H1 (cell line): ENCODE measurements at regions of chr7 and their contacts with region 1.

Region 1: DNA sequence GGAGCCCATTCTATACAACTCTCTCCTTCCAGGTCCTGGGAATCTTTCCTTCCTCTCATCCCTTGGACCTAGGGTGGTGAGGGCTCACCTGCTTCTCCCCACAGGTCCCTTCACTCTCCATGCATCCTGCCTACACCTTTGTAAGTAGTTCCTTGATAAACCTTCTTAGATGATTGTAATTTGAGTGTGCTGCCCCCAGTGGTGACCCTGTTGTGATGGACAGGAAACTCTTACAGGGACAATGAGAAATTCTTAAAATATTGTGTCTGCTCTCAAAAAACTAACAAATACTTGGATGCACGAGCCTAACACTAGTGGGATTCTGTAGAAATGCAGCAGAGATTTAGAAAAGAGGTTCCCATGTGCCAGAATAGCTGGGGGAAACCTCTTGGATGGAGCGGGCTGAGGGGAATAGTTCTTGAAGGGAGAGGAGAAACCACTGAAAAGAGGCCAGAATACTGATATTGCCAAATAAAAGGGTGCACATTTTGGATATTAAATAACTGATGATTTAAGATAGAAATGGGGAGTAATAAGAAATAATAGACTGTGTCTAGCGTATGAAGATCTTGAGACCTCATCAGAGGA is 6.7 kb upstream of the PAXIP1 start:
- DNase-seq: no peak
- H3K4me3 ChIP-seq: no peak overlapping the region
- H3K27ac ChIP-seq: no peak overlapping the region
- H3K4me1 ChIP-seq: no peaks in the 10 kb centered on the region
- H3K27me3 ChIP-seq: no peaks in the 10 kb centered on the region
- CTCF ChIP-seq: peak in 2 of 3 experiments; percentile 29 to 54; a peak in 2 of 4 replicates
- EP300 ChIP-seq: no peak
- POLR2A ChIP-seq: no peak
- RAD21 ChIP-seq: no peak; a peak in 1 of 4 replicates

Region 2: DNA sequence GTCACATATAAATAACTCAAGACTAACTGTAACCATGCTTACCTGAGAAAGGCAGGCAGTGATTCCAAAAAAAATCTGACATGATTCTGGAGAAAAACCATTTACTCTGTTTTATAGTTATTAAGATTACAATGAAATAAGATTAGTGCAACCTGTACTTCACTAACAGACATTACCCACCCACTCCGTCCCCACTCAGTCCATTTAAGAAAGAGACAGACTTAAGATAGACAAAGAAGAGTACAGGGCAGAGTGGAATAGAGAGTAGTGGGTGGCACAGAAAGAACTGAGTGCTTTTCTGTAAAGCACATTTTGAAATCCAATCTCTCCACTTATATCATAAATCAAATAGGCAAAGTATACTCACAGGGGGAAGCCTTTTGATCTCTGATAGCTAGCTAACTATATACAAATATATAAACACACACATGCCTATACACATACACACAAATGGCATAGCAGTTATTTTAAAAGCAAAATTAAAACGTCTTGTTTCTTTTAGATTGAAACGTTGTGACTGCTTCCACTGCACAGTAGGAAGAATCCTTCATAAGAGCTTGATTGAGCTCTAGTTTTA is 18.6 kb before region 1 on chr7:
- CTCF ChIA-PET with region 1: interaction called, 56 read pairs
- POLR2A ChIA-PET with region 1: no interaction called
- DNase-seq: no peak
- H3K4me3 ChIP-seq: no peak overlapping the region
- H3K27ac ChIP-seq: no peak overlapping the region
- H3K4me1 ChIP-seq: no peaks in the 10 kb centered on the region; a peak in 1 of 7 replicates
- H3K27me3 ChIP-seq: no peaks in the 10 kb centered on the region
- CTCF ChIP-seq: no peak
- EP300 ChIP-seq: no peak
- POLR2A ChIP-seq: no peak
- RAD21 ChIP-seq: no peak

Region 3: DNA sequence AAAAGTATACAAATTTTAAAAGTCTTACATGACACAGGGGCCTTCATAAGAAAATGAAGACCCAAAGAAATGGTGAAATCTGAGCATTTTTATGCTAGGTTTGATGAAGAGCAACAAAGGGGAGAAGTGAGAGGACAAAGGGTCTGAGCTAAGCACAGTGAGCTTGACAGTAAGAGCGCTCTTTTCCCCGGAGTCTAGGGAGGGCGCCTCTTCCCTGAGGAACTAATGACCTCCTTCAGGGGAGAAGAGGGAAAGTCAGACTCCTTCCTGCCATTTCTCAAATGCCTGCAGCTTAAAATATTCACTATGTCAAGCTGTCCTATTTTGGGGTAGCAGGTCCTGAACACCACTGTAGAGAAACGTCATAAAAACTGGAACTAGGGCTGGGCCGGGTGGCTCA is 11.3 kb after region 1 on chr7:
- CTCF ChIA-PET with region 1: interaction called, 136 read pairs
- POLR2A ChIA-PET with region 1: interaction called, 5 read pairs
- DNase-seq: peak in 1 of 2 experiments; percentile 42
- H3K4me3 ChIP-seq: no peak overlapping the region
- H3K27ac ChIP-seq: no peak overlapping the region
- H3K4me1 ChIP-seq: no peaks in the 10 kb centered on the region; a peak in 2 of 7 replicates
- H3K27me3 ChIP-seq: no peaks in the 10 kb centered on the region
- CTCF ChIP-seq: peak; percentile 34 to 54 (median 36); a peak in 3 of 4 replicates
- EP300 ChIP-seq: no peak
- POLR2A ChIP-seq: no peak
- RAD21 ChIP-seq: peak; percentile 57 to 58

Region 4: DNA sequence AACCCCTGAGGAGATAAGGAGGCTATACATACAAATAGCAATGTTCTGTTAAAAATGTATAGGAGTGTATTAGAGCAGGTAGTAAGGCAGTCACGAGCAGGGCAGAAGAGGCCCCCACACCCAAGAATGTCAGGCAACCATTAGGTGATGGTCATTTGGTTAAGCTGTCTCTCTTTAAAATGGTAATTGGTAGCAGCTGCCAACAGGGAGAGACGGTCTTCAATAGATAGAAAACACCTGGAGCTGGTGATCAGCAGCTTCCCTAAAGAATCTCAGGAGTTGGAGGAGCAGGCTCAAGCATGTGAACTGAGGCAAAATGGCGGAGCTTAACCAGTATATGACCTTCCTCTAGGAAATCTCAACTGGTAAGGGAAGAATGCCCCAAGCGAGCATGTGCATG is 34.1 kb after region 1 on chr7:
- CTCF ChIA-PET with region 1: interaction called, 10 read pairs
- POLR2A ChIA-PET with region 1: no interaction called
- DNase-seq: no peak
- H3K4me3 ChIP-seq: no peak overlapping the region
- H3K27ac ChIP-seq: no peak overlapping the region
- H3K4me1 ChIP-seq: peaks cover 0 to 6% (median 1%) of the 10 kb centered on the region in 4 experiments; a peak in 2 of 7 replicates
- H3K27me3 ChIP-seq: no peaks in the 10 kb centered on the region; a peak in 1 of 7 replicates
- CTCF ChIP-seq: no peak
- EP300 ChIP-seq: no peak
- POLR2A ChIP-seq: no peak
- RAD21 ChIP-seq: no peak

Region 5: GRCh38 chr7:155093596-155093995 is 83.9 kb after region 1 on chr7:
- CTCF ChIA-PET with region 1: no interaction called
- POLR2A ChIA-PET with region 1: no interaction called
- DNase-seq: no peak
- H3K4me3 ChIP-seq: no peak overlapping the region
- H3K27ac ChIP-seq: no peak overlapping the region
- H3K4me1 ChIP-seq: no peaks in the 10 kb centered on the region
- H3K27me3 ChIP-seq: no peaks in the 10 kb centered on the region
- CTCF ChIP-seq: no peak
- EP300 ChIP-seq: no peak
- POLR2A ChIP-seq: no peak
- RAD21 ChIP-seq: no peak